Naive thymus-derived CD4-positive, alpha-beta T cell (primary cell): ENCODE measurements at regions of chr3 and their contacts with region 1.

Region 1: GRCh38 chr3:119463171-119464169 is at the start of gene TMEM39A:
- DNase-seq: peak; percentile 97 to 99 (median 98)
- ATAC-seq: peak; percentile 91
- H3K4me3 ChIP-seq: peak within 1 kb of the TSS; percentile 93
- H3K4me3 Mint-ChIP-seq: peak within 1 kb of the TSS; percentile 82 to 96 (median 93)
- H3K27ac ChIP-seq: peak within 1 kb of the TSS; percentile 86
- H3K27ac Mint-ChIP-seq: peak within 1 kb of the TSS; percentile 97 to 100 (median 99)
- H3K4me1 ChIP-seq: peaks cover 16 to 26% of the 10 kb centered on the region in 2 donors
- H3K4me1 Mint-ChIP-seq: peaks cover 22 to 56% (median 45%) of the 10 kb centered on the region in 7 donors
- H3K27me3 ChIP-seq: no peaks in the 10 kb centered on the region
- H3K27me3 Mint-ChIP-seq: peaks cover 0 to 4% (median 0%) of the 10 kb centered on the region in 5 donors
- total RNA-seq, gene TMEM39A: 34.9 to 59.5 (median 49.7) TPM

Region 2: GRCh38 chr3:119322835-119323722 is 140.4 kb before region 1 on chr3:
- CTCF ChIA-PET with region 1: no interaction called
- POLR2A ChIA-PET with region 1: no interaction called
- intact Hi-C with region 1: loop called (anchors 1 kb)
- DNase-seq: peak; percentile 77 to 96 (median 81)
- ATAC-seq: peak; percentile 90
- H3K4me3 ChIP-seq: peak overlapping the region; percentile 65
- H3K4me3 Mint-ChIP-seq: peak overlapping the region; percentile 84 to 96 (median 90)
- H3K27ac ChIP-seq: peak overlapping the region; percentile 81
- H3K27ac Mint-ChIP-seq: peak overlapping the region; percentile 90 to 99 (median 95)
- H3K4me1 ChIP-seq: peaks cover 10 to 14% of the 10 kb centered on the region in 2 donors
- H3K4me1 Mint-ChIP-seq: peaks cover 12 to 30% (median 21%) of the 10 kb centered on the region in 7 donors
- H3K27me3 ChIP-seq: no peaks in the 10 kb centered on the region
- H3K27me3 Mint-ChIP-seq: peaks cover 0 to 57% (median 0%) of the 10 kb centered on the region in 5 donors

Region 3: DNA sequence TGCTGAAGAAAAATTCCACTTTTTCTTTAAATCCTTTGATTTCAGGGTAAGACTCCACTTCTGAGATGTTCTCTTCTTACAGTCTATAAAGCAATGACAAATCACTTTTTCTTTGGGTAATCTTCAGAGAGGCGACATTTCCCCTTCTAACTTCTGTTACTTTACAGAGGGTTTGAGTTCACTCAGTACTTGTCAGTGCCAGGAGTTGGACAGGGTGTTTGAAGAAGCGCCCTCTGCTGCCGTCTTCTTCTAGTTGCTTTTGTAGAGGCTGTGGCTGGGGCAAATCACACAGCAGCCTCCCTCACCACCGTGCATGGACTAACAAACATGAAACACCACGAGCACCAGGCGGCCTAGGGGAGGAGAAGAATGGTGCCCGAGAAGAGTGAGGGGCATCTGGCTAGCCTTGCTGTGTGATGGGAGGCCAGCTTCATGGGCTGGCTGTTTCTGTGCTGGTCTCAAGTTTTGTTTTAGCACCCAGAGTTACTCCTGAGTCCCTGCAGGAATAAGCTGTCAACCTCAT is 96.0 kb after region 1 on chr3 and contains the start of gene CD80:
- CTCF ChIA-PET with region 1: no interaction called
- POLR2A ChIA-PET with region 1: no interaction called
- intact Hi-C with region 1: loop called in 1 of 2 experiments (anchors 1 kb)
- DNase-seq: peak in 7 of 9 donors; percentile 14 to 63 (median 33)
- ATAC-seq: peak; percentile 76
- H3K4me3 ChIP-seq: no peak within 1 kb of the TSS
- H3K4me3 Mint-ChIP-seq: peak within 1 kb of the TSS in 2 of 10 donors; percentile 12 to 81
- H3K27ac ChIP-seq: no peak within 1 kb of the TSS
- H3K27ac Mint-ChIP-seq: peak within 1 kb of the TSS in 2 of 9 donors; percentile 68 to 71
- H3K4me1 ChIP-seq: peaks cover 0 to 6% of the 10 kb centered on the region in 2 donors
- H3K4me1 Mint-ChIP-seq: peaks cover 0 to 64% (median 8%) of the 10 kb centered on the region in 7 donors
- H3K27me3 ChIP-seq: no peaks in the 10 kb centered on the region
- H3K27me3 Mint-ChIP-seq: peaks cover 0 to 5% (median 0%) of the 10 kb centered on the region in 5 donors
- total RNA-seq, gene CD80: 0.13 to 15.1 (median 1.2) TPM in 3 of 5 experiments, not detected in the others

Region 4: DNA sequence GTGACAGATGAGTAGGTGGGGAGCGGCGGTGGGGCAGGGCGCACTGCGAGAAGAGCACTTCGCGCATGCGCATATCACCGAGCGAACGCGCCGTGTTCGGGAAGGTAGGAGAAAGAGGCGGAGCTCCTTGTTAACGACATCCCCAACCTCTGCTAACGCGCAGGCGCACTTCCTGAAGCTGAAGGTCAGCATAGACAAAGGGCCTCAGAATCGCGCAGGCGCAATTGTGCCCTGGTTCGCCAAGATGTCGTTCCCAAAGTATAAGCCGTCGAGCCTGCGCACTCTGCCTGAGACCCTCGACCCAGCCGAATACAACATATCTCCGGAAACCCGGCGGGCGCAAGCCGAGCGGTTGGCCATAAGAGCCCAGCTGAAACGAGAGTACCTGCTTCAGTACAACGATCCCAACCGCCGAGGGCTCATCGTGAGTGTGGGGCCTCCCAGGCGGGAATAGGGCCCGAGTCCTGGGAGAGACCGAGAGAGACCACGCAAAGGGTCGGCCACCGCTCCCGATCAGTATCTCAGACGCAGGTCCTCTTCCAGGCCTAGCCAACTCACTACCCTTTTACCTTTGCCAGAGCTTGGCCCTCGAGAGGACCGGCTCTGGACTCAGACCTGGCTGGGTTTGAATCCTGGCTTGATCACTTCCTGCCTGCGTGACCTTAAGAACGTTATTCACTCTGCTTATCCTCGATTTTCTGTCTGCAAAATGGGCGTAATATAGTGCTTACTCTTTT is 1132.8 kb after region 1 on chr3 and contains the start of gene NDUFB4:
- CTCF ChIA-PET with region 1: no interaction called
- POLR2A ChIA-PET with region 1: interaction called, 3 read pairs
- intact Hi-C with region 1: loop called in 1 of 2 experiments (anchors 10 kb)
- DNase-seq: peak; percentile 84 to 97 (median 93)
- ATAC-seq: peak; percentile 97
- H3K4me3 ChIP-seq: peak within 1 kb of the TSS; percentile 99
- H3K4me3 Mint-ChIP-seq: peak within 1 kb of the TSS in 8 of 10 donors; percentile 85 to 99 (median 96)
- H3K27ac ChIP-seq: peak within 1 kb of the TSS; percentile 92
- H3K27ac Mint-ChIP-seq: peak within 1 kb of the TSS in 5 of 9 donors; percentile 94 to 99 (median 98)
- H3K4me1 ChIP-seq: peaks cover 25 to 27% of the 10 kb centered on the region in 2 donors
- H3K4me1 Mint-ChIP-seq: peaks cover 0 to 20% (median 11%) of the 10 kb centered on the region in 7 donors
- H3K27me3 ChIP-seq: no peaks in the 10 kb centered on the region
- H3K27me3 Mint-ChIP-seq: peaks cover 0 to 20% (median 0%) of the 10 kb centered on the region in 5 donors
- total RNA-seq, gene NDUFB4: 63.4 to 126 (median 76.2) TPM